Caco-2 (cell line): ENCODE measurements at regions of chr2 and their contacts with region 1.

Region 1: DNA sequence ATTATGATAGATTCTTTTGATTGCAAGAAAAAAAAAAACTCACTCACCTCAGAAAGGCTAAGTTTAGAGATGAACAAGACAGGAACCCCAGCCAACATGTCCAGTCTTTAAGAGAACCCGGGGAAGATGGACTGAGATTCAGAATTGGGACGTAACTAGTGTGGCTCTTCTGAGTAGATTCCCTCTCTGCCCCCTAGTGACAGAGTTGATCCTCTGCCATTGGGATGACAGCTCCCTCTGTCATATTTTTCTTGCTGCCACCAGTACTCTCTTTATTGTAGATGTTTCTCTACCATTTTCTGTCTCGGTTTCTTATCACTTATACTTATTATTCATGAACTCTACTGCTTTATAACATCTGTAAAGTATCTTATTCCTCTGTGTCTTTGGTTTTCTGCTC is 77.7 kb downstream of the GULP1 start:
- DNase-seq: peak; percentile 50 to 62
- H3K4me3 ChIP-seq: no peak overlapping the region
- H3K4me3 Mint-ChIP-seq: no peak overlapping the region
- H3K27ac Mint-ChIP-seq: no peak overlapping the region
- H3K4me1 ChIP-seq: peaks cover 5% of the 10 kb centered on the region; the same call in 1 of the 2 replicates
- H3K4me1 Mint-ChIP-seq: peaks cover 10% of the 10 kb centered on the region
- H3K27me3 ChIP-seq: no peaks in the 10 kb centered on the region
- H3K27me3 Mint-ChIP-seq: no peaks in the 10 kb centered on the region
- CTCF ChIP-seq: peak; percentile 73 to 88

Region 2: GRCh38 chr2:187499941-187500532 is 869.3 kb before region 1 on chr2:
- CTCF ChIA-PET with region 1: no interaction called
- POLR2A ChIA-PET with region 1: no interaction called
- intact Hi-C with region 1: loop called (anchors 2 kb)
- DNase-seq: peak; percentile 52 to 71
- H3K4me3 ChIP-seq: no peak overlapping the region
- H3K4me3 Mint-ChIP-seq: no peak overlapping the region
- H3K27ac Mint-ChIP-seq: no peak overlapping the region
- H3K4me1 ChIP-seq: peaks cover 7% of the 10 kb centered on the region; the same call in 1 of the 2 replicates
- H3K4me1 Mint-ChIP-seq: peaks cover 19% of the 10 kb centered on the region
- H3K27me3 ChIP-seq: no peaks in the 10 kb centered on the region
- H3K27me3 Mint-ChIP-seq: no peaks in the 10 kb centered on the region
- CTCF ChIP-seq: peak; percentile 80 to 91

Region 3: DNA sequence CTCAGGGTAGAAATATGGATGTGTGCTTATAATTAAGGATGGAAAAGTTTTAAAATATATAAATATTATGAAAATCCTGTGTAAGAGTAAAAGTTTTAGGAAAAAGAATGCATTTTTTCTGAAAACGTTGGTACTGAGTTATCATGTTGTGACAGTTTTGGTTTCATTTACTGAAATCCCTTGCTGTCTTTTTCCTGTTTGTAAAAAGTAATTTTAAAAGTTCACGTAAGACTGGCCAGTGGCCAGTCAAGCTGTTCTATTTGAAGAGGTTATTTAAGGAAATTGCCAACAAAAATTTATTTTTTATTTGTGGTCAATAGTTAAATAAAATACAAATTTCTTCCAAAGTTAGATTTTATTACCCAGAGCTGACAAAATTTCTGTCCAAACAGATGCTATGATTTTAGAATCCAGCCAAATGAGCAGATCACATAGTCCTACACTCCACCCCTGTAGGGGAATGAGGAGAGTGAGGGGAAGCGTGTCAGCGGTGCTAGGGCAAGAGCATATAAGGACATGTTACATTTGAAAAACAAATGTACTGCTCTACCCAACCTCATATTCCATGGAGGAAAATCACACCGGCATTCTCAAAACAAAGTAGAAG is 517.3 kb before region 1 on chr2:
- CTCF ChIA-PET with region 1: no interaction called
- POLR2A ChIA-PET with region 1: no interaction called
- intact Hi-C with region 1: loop called (anchors 10 kb)
- DNase-seq: no peak
- H3K4me3 ChIP-seq: no peak overlapping the region
- H3K4me3 Mint-ChIP-seq: no peak overlapping the region
- H3K27ac Mint-ChIP-seq: no peak overlapping the region
- H3K4me1 ChIP-seq: peaks cover 27% of the 10 kb centered on the region
- H3K4me1 Mint-ChIP-seq: peaks cover 15% of the 10 kb centered on the region
- H3K27me3 ChIP-seq: no peaks in the 10 kb centered on the region
- H3K27me3 Mint-ChIP-seq: no peaks in the 10 kb centered on the region
- CTCF ChIP-seq: no peak

Region 4: GRCh38 chr2:188068093-188068492 is 301.3 kb before region 1 on chr2:
- CTCF ChIA-PET with region 1: no interaction called
- POLR2A ChIA-PET with region 1: no interaction called
- intact Hi-C with region 1: loop called (anchors 1 kb)
- DNase-seq: no peak
- H3K4me3 ChIP-seq: no peak overlapping the region
- H3K4me3 Mint-ChIP-seq: no peak overlapping the region
- H3K27ac Mint-ChIP-seq: no peak overlapping the region
- H3K4me1 ChIP-seq: no peaks in the 10 kb centered on the region
- H3K4me1 Mint-ChIP-seq: no peaks in the 10 kb centered on the region
- H3K27me3 ChIP-seq: no peaks in the 10 kb centered on the region
- H3K27me3 Mint-ChIP-seq: peaks cover 4% of the 10 kb centered on the region
- CTCF ChIP-seq: no peak

Region 5: GRCh38 chr2:188204824-188205223 is 164.5 kb before region 1 on chr2:
- CTCF ChIA-PET with region 1: interaction called, 5 read pairs
- POLR2A ChIA-PET with region 1: no interaction called
- intact Hi-C with region 1: loop called (anchors 5 kb)
- DNase-seq: no peak
- H3K4me3 ChIP-seq: no peak overlapping the region
- H3K4me3 Mint-ChIP-seq: no peak overlapping the region
- H3K27ac Mint-ChIP-seq: no peak overlapping the region
- H3K4me1 ChIP-seq: no peaks in the 10 kb centered on the region
- H3K4me1 Mint-ChIP-seq: no peaks in the 10 kb centered on the region
- H3K27me3 ChIP-seq: no peaks in the 10 kb centered on the region
- H3K27me3 Mint-ChIP-seq: peaks cover 4% of the 10 kb centered on the region
- CTCF ChIP-seq: peak in 1 of 2 experiments; percentile 9

Region 6: DNA sequence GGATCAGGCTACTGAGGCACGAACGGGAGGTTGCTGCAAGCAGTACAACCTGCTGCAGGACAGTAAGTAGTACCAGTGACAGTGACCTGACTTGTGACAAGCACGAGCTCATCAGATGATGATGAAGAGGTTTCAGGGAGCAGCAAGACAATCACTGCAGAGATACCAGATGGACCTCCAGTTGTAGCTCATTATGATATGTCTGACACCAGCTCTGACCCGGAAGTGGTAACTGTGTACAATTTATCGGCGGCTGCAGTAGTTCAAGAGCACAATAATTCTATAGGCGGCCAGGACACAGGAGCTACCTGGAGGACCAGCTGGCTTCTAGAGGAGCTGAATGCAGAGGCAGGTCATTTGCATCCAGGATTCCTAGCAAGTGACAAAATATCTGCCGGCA is 141.7 kb before region 1 on chr2:
- CTCF ChIA-PET with region 1: no interaction called
- POLR2A ChIA-PET with region 1: no interaction called
- intact Hi-C with region 1: loop called (anchors 5 kb)
- DNase-seq: no peak
- H3K4me3 ChIP-seq: no peak overlapping the region
- H3K4me3 Mint-ChIP-seq: no peak overlapping the region
- H3K27ac Mint-ChIP-seq: no peak overlapping the region
- H3K4me1 ChIP-seq: no peaks in the 10 kb centered on the region
- H3K4me1 Mint-ChIP-seq: no peaks in the 10 kb centered on the region
- H3K27me3 ChIP-seq: no peaks in the 10 kb centered on the region
- H3K27me3 Mint-ChIP-seq: no peaks in the 10 kb centered on the region
- CTCF ChIP-seq: no peak

Region 7: GRCh38 chr2:188291617-188292347 is 77.6 kb before region 1 on chr2 and contains the start of gene GULP1:
- CTCF ChIA-PET with region 1: interaction called, 37 read pairs
- POLR2A ChIA-PET with region 1: no interaction called
- intact Hi-C with region 1: loop called (anchors 1 kb)
- DNase-seq: peak; percentile 82 to 85
- H3K4me3 ChIP-seq: peak within 1 kb of the TSS; percentile 92
- H3K4me3 Mint-ChIP-seq: peak within 1 kb of the TSS; percentile 94
- H3K27ac Mint-ChIP-seq: peak within 1 kb of the TSS; percentile 89
- H3K4me1 ChIP-seq: peaks cover 17% of the 10 kb centered on the region
- H3K4me1 Mint-ChIP-seq: no peaks in the 10 kb centered on the region
- H3K27me3 ChIP-seq: no peaks in the 10 kb centered on the region
- H3K27me3 Mint-ChIP-seq: no peaks in the 10 kb centered on the region
- CTCF ChIP-seq: peak; percentile 75 to 90
- total RNA-seq, gene GULP1: 32.4 and 33.0 TPM in 2 replicates

Region 8: DNA sequence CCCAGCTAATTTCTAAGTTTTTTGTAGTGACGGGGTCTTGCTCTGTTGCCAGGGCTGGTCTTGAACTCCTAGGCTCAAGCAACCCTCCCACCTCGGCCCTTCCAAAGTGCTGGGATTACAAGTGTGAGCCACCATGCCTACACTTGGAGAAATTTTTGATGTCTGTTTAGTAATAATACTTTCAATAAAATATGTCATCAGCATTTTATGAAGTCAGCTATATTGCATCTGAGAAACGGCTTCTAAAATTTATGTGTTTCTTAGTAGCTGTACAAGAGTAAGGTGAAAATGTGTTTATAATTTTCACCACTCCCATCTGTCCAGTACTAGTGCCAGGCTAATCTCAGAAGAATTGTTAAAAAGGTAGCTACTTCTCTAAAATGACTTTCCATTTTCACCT is 30.9 kb before region 1 on chr2:
- CTCF ChIA-PET with region 1: no interaction called
- POLR2A ChIA-PET with region 1: no interaction called
- intact Hi-C with region 1: no loop called
- DNase-seq: no peak
- H3K4me3 ChIP-seq: no peak overlapping the region
- H3K4me3 Mint-ChIP-seq: no peak overlapping the region
- H3K27ac Mint-ChIP-seq: no peak overlapping the region
- H3K4me1 ChIP-seq: no peaks in the 10 kb centered on the region
- H3K4me1 Mint-ChIP-seq: no peaks in the 10 kb centered on the region
- H3K27me3 ChIP-seq: no peaks in the 10 kb centered on the region
- H3K27me3 Mint-ChIP-seq: no peaks in the 10 kb centered on the region
- CTCF ChIP-seq: no peak